CD4-positive, alpha-beta memory T cell (primary cell): ENCODE measurements at regions of chr9 and their contacts with region 1.

Region 1: GRCh38 chr9:99819856-99820684 is 1.6 kb upstream of the NR4A3 start:
- DNase-seq: peak; percentile 94 to 96 (median 95)
- H3K4me3 ChIP-seq: peak overlapping the region; percentile 82 to 83
- H3K4me3 Mint-ChIP-seq: peak overlapping the region; percentile 90 to 100 (median 97)
- H3K27ac ChIP-seq: peak overlapping the region; percentile 93
- H3K27ac Mint-ChIP-seq: peak overlapping the region; percentile 100
- H3K4me1 ChIP-seq: peaks cover 41% of the 10 kb centered on the region
- H3K4me1 Mint-ChIP-seq: peaks cover 29 to 67% (median 44%) of the 10 kb centered on the region in 4 donors
- H3K27me3 ChIP-seq: peaks cover 21% of the 10 kb centered on the region
- H3K27me3 Mint-ChIP-seq: peaks cover 22 to 29% of the 10 kb centered on the region in 2 donors

Region 2: DNA sequence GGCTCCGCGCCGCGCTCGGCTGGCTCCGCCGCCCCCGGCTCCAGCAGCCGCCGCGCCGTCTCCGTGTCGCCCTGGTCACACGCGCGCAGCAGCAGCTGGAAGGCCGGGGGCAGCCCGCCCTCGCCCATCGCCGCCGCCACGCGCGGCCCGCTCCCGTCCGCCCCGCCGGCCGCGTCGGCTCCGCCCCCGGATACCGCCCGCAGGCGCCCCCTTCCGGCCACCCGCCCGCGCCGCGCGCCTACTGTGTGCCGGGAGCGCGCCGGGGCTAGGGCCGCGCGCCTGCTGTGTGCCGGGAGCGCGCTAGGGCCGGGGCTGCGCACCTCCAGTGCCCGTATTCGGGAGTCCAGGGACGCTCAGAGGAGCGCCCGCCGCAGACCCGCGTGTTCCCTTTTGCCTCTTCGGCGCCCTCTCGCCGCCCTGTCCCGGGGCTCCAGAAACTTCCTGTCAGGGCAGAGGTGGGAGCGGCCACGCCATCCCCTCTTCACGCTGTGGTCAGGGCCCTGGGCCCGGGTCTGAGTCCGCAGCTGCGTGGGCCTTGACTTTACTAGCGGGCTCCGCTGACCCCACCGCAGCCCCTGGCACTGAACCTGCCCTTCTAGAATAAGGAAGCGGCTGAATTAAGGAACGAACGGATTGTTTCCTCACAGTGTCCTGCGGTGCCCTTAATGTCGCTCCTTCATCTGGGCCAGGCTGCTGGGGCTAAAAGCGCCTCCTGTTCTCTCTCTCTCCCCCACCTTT is 1023.5 kb before region 1 on chr9 and contains the start of gene ANKS6:
- CTCF ChIA-PET with region 1: no interaction called
- POLR2A ChIA-PET with region 1: no interaction called
- intact Hi-C with region 1: loop called (anchors 5 kb)
- DNase-seq: peak; percentile 63 to 88 (median 83)
- H3K4me3 ChIP-seq: peak within 1 kb of the TSS; percentile 42 to 67
- H3K4me3 Mint-ChIP-seq: peak within 1 kb of the TSS; percentile 84 to 91 (median 89)
- H3K27ac ChIP-seq: peak within 1 kb of the TSS; percentile 43
- H3K27ac Mint-ChIP-seq: peak within 1 kb of the TSS; percentile 43 to 84 (median 79)
- H3K4me1 ChIP-seq: peaks cover 17% of the 10 kb centered on the region
- H3K4me1 Mint-ChIP-seq: peaks cover 23 to 48% (median 31%) of the 10 kb centered on the region in 4 donors
- H3K27me3 ChIP-seq: no peaks in the 10 kb centered on the region
- H3K27me3 Mint-ChIP-seq: peaks cover 0 to under 1% of the 10 kb centered on the region in 2 donors
- total RNA-seq, gene ANKS6: 10.1 to 12.2 TPM

Region 3: DNA sequence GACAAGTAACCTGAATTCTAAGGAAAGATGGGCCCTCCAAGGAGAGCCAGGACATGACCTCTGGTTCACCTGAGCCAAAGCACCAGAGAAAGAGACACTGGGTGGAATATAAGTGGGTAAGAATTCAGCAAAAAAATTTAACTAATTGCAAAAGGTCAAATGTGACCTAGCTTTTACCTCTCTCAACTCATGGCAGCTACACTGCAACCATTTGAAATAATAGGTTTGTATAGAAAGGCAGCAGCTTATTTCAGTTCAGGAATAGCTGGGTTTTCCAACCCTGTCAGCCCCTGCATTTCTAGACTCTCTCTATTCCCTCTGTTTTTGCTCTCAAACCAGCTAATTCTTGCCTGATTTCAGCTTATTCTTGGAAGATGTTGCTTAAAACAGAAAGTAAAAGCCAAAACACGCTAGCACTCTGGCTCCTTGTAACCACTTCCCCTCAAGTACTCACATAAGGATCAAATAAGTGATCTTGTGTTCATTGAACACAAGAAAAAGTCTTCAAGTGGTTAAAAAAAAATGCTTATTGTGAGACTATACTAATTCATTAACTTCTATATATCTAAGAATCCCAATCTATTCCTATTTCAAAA is 99.5 kb before region 1 on chr9:
- CTCF ChIA-PET with region 1: no interaction called
- POLR2A ChIA-PET with region 1: no interaction called
- intact Hi-C with region 1: loop called (anchors 1 kb)
- DNase-seq: peak in 4 of 5 donors; percentile 8 to 25 (median 19)
- H3K4me3 ChIP-seq: peak overlapping the region; percentile 43 to 45
- H3K4me3 Mint-ChIP-seq: peak overlapping the region; percentile 73 to 91 (median 84)
- H3K27ac ChIP-seq: peak overlapping the region; percentile 10
- H3K27ac Mint-ChIP-seq: peak overlapping the region; percentile 69 to 94 (median 93)
- H3K4me1 ChIP-seq: peaks cover 30% of the 10 kb centered on the region
- H3K4me1 Mint-ChIP-seq: peaks cover 25 to 33% (median 27%) of the 10 kb centered on the region in 4 donors
- H3K27me3 ChIP-seq: no peaks in the 10 kb centered on the region
- H3K27me3 Mint-ChIP-seq: no peaks in the 10 kb centered on the region

Region 4: DNA sequence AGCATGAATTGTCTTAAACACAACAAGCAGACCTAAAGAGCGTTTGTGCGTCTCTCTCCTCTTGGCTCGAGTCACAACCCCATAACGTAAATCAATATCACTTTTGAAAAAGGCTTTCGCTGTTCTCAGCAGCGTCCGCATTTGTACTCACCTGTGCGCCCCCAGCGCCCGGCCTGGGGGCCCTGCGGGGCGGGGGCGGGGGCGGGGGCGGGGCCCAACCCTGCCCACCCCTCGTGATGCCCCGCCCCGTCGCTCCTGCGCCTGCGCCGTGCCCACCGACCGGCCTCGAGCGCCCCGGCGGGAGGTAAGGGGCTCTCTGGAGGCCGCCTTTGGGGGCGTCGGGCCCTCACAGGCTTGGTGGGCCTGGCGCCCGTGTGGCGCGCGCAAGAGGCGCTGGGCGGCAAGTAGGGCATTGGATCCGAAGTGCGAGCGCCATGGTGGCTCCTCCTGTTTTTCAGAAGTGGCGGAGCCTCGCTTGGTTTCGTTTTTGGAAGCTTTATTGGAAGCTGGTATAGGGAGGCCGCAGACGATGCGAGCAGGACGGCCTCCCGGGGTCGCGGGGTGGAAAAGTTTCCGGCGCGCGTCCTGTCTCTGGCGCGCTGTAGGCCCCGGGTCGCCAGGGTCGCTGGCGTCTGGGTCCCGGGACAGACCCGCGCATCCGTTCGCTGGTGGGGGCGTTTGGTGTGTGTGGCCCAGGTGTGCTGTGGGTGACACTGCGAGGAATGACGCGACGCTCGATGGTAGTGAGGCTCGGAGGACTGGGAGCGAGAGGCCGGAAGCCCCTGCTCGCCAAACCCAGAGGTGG is 86.5 kb after region 1 on chr9 and contains the start of gene STX17:
- CTCF ChIA-PET with region 1: interaction called, 12 read pairs
- POLR2A ChIA-PET with region 1: interaction called, 58 read pairs
- intact Hi-C with region 1: loop called (anchors 1 kb)
- DNase-seq: peak; percentile 85 to 92 (median 88)
- H3K4me3 ChIP-seq: peak within 1 kb of the TSS; percentile 26 to 90
- H3K4me3 Mint-ChIP-seq: peak within 1 kb of the TSS; percentile 96 to 100 (median 98)
- H3K27ac ChIP-seq: peak within 1 kb of the TSS; percentile 96
- H3K27ac Mint-ChIP-seq: peak within 1 kb of the TSS; percentile 99 to 100 (median 99)
- H3K4me1 ChIP-seq: peaks cover 26% of the 10 kb centered on the region
- H3K4me1 Mint-ChIP-seq: peaks cover 26 to 44% (median 34%) of the 10 kb centered on the region in 4 donors
- H3K27me3 ChIP-seq: no peaks in the 10 kb centered on the region
- H3K27me3 Mint-ChIP-seq: no peaks in the 10 kb centered on the region
- total RNA-seq, gene STX17: 52.2 to 61.5 TPM

Region 5: DNA sequence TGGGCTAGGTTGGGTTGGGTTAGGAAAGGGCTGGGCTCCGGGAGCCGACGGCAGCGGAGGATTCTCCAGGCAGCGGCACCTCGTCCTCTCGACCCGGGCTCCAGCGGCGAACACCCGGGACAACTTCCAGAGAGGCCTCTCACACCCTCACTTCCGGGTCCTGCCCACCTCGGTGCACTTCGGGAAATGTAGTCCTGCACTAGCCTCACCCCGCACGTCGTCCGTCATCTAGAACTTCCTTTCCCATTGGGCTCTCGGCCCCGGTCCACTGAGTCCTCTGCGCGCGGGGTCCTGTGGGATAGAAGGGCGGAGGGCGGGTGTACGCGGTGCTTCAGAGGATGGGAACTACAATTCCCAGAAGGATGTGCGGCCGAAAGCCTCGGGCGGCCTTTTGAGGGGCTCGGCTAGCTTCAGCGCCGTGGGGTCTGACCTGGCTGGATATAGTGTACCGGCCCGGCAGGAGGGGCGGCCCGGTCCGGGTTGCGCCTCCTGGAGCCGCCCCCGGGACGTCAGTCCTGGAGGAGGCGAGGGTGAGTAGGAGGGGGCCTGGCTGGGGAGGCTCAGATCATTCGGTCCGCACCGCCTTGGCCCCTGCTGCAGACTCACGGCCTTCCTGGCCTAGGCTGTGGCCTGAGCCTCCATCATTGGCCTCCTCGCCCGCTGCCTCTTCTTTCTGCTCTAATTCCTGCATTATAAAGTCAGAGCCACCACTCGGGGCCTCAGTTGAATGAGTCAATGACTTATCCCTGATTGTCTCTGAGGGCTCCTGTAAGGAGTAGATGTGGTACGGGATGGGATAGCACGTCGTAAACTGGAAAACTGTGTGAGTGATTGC is 279.0 kb after region 1 on chr9 and contains the starts of genes ERP44 and INVS:
- CTCF ChIA-PET with region 1: no interaction called
- POLR2A ChIA-PET with region 1: interaction called, 3 read pairs
- intact Hi-C with region 1: loop called (anchors 1 kb)
- DNase-seq: peak; percentile 96 to 99 (median 96)
- H3K4me3 ChIP-seq: peak within 1 kb of the TSS; percentile 85 to 89
- H3K4me3 Mint-ChIP-seq: peak within 1 kb of the TSS; percentile 94 to 100 (median 100)
- H3K27ac ChIP-seq: peak within 1 kb of the TSS; percentile 80
- H3K27ac Mint-ChIP-seq: peak within 1 kb of the TSS; percentile 91 to 99 (median 98)
- H3K4me1 ChIP-seq: peaks cover 26% of the 10 kb centered on the region
- H3K4me1 Mint-ChIP-seq: peaks cover 21 to 56% (median 36%) of the 10 kb centered on the region in 4 donors
- H3K27me3 ChIP-seq: no peaks in the 10 kb centered on the region
- H3K27me3 Mint-ChIP-seq: no peaks in the 10 kb centered on the region
- total RNA-seq, gene ERP44: 16.5 to 17.0 TPM
- total RNA-seq, gene INVS: 17.6 to 22.9 TPM

Region 6: DNA sequence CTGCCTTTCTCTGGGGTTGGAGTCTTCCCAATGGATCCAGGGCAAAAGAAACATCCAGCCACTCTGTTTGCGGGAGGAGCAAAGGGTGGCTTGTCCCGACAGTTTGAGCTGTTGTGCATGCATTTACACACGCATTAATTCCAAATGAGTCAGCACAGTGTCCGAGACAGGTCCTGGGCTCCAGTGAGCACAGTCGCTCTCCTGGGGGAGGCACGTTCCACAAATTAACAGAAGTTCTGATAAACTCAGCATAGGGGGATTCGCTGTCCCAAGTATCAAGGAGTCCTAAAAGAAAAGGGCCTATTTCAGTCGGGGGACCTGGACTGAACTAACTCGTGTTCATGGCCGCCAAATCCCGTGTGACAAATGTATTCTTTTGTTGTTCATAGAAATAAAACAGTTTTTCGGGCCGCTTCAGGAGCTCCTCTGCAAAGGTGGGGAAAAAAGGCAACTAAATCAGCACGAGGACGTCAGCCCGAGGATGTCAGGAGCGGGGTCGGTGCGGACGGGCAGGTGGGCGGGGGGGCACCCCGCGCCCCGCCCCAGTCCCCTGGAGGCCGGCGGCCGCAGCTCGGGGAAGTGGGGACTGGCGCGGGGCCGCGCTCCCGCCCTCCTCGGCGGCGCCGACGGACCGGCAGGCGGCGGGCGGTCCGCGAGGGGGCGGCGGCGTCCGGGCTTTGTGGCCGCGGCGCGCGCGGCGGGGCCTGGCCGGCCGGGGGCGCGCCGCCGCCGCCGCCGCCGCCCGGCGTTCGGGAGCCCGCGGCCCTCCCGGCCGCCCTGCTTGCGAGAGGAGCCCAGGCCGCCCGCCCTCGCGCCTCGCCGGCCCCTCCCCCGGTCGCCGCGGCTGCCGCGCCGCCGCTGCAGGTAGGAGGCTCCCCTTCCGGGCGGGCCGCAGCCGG is 606.7 kb after region 1 on chr9 and contains the start of gene MSANTD3:
- CTCF ChIA-PET with region 1: no interaction called
- POLR2A ChIA-PET with region 1: interaction called, 3 read pairs
- intact Hi-C with region 1: loop called (anchors 5 kb)
- DNase-seq: peak; percentile 39 to 57 (median 48)
- H3K4me3 ChIP-seq: peak within 1 kb of the TSS; percentile 64 to 72
- H3K4me3 Mint-ChIP-seq: peak within 1 kb of the TSS; percentile 94 to 99 (median 96)
- H3K27ac ChIP-seq: peak within 1 kb of the TSS; percentile 40
- H3K27ac Mint-ChIP-seq: peak within 1 kb of the TSS; percentile 92 to 97 (median 95)
- H3K4me1 ChIP-seq: peaks cover 26% of the 10 kb centered on the region
- H3K4me1 Mint-ChIP-seq: peaks cover 27 to 50% (median 35%) of the 10 kb centered on the region in 4 donors
- H3K27me3 ChIP-seq: no peaks in the 10 kb centered on the region
- H3K27me3 Mint-ChIP-seq: peaks cover 1% of the 10 kb centered on the region in 2 donors
- total RNA-seq, gene MSANTD3: 14.4 to 14.8 TPM